HCT116 (cell line): ENCODE measurements at regions of chr9 and their contacts with region 1.

Region 1: GRCh38 chr9:35096035-35096849 is at the start of gene PIGO:
- DNase-seq: peak; percentile 81
- ATAC-seq: peak; percentile 90
- H3K4me3 ChIP-seq: peak within 1 kb of the TSS; percentile 57 to 92
- H3K27ac ChIP-seq: peak within 1 kb of the TSS; percentile 92
- H3K4me1 ChIP-seq: peaks cover 5 to 19% of the 10 kb centered on the region in 2 experiments; a peak in 3 of 4 replicates
- H3K27me3 ChIP-seq: no peaks in the 10 kb centered on the region
- CTCF ChIP-seq: peak in 2 of 3 experiments; percentile 59 to 78; a peak in 4 of 6 replicates
- POLR2A ChIP-seq: no peak
- RAD21 ChIP-seq: no peak
- total RNA-seq, gene PIGO: 24.0 TPM

Region 2: DNA sequence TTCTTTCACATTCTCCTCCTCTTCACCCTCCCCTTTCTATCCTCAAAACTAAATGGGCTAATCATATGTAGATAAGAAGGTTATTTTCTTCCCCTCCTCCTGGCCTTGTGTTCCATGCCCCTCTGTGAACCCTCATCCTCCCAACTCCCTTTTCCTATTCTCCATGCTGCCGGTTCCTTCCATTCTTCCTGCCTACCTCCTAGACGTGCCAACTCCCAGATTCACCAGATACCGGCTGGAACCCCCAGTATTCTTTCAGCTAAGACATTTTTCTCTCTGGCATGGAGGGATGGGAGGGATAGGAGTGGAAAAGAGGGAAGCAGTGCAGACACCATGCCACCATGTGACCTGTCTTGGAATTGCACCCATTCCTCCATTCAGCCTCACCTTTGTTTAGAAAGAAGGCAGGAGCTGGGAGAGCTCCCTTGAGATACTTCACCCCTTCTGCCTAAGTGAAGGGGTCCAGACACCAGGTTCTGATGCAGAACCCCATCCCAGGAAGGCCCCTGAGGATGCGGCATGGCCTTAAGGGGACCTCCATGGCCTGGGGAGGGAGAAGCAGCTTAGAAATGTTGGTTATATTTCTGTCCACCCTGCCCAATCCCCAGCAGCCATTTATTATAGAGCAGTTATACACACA is 101.9 kb before region 1 on chr9:
- CTCF ChIA-PET with region 1: interaction called, 4 read pairs
- POLR2A ChIA-PET with region 1: no interaction called
- RAD21 ChIA-PET with region 1: no interaction called
- intact Hi-C with region 1: loop called (anchors 5 kb)
- DNase-seq: peak; percentile 29
- ATAC-seq: peak; percentile 48
- H3K4me3 ChIP-seq: no peak overlapping the region
- H3K27ac ChIP-seq: no peak overlapping the region
- H3K4me1 ChIP-seq: peaks cover 21 to 52% of the 10 kb centered on the region in 2 experiments
- H3K27me3 ChIP-seq: no peaks in the 10 kb centered on the region
- CTCF ChIP-seq: peak in 2 of 3 experiments; percentile 76 to 81; a peak in 4 of 6 replicates
- POLR2A ChIP-seq: no peak
- RAD21 ChIP-seq: no peak

Region 3: GRCh38 chr9:35079426-35080341 is 16.6 kb before region 1 on chr9 and contains the start of gene FANCG:
- CTCF ChIA-PET with region 1: interaction called, 6 read pairs
- POLR2A ChIA-PET with region 1: interaction called, 12 read pairs
- RAD21 ChIA-PET with region 1: interaction called in 1 of 2 experiments, 5 read pairs
- intact Hi-C with region 1: no loop called
- DNase-seq: peak; percentile 80
- ATAC-seq: peak; percentile 91
- H3K4me3 ChIP-seq: peak within 1 kb of the TSS; percentile 91 to 94
- H3K27ac ChIP-seq: peak within 1 kb of the TSS; percentile 76
- H3K4me1 ChIP-seq: peaks cover 12 to 21% of the 10 kb centered on the region in 2 experiments
- H3K27me3 ChIP-seq: no peaks in the 10 kb centered on the region
- CTCF ChIP-seq: no peak
- POLR2A ChIP-seq: no peak
- RAD21 ChIP-seq: no peak
- total RNA-seq, gene FANCG: 82.3 TPM